ENCODE measurements at regions of chr11 and their contacts with region 1.

Region 1: GRCh38 chr11:116960930-116961329 is 123.5 kb upstream of the APOA1 start:
- DNase-seq: no peak
- ATAC-seq: no peak
- H3K4me3 Mint-ChIP-seq: no peak overlapping the region
- H3K27ac Mint-ChIP-seq: no peak overlapping the region
- H3K4me1 Mint-ChIP-seq: peaks cover 48% of the 10 kb centered on the region
- H3K27me3 Mint-ChIP-seq: no peaks in the 10 kb centered on the region

Region 2: DNA sequence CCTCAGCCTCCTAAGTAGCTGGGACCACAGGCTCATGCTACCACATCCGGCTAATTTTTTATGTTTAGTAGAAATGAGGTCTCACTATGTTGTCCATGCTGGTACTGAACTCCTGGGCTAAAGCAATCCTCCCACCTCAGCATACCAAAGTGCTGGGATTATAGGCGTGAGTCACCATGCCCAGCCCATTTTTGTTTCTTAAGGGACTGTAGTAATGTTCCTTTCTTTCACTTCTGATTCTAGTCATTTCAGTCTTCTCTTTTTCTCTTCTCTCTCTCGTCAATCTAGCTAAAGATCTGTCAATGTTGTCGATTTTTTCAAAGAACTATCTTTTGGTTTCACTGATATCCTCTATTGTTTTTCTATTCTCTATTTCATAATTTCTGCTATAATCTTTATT is 12.5 kb before region 1 on chr11:
- CTCF ChIA-PET with region 1: interaction called, 12 read pairs
- POLR2A ChIA-PET with region 1: interaction called, 3 read pairs
- intact Hi-C with region 1: no loop called
- DNase-seq: peak; percentile 61
- ATAC-seq: peak; percentile 90
- H3K4me3 Mint-ChIP-seq: no peak overlapping the region
- H3K27ac Mint-ChIP-seq: no peak overlapping the region
- H3K4me1 Mint-ChIP-seq: peaks cover 24% of the 10 kb centered on the region
- H3K27me3 Mint-ChIP-seq: no peaks in the 10 kb centered on the region